BJ (cell line): ENCODE measurements at regions of chr3 and their contacts with region 1.

Region 1: GRCh38 chr3:11335056-11335608 is 62.9 kb downstream of the ATG7 start:
- DNase-seq: no peak
- H3K4me3 ChIP-seq: no peak overlapping the region
- H3K27me3 ChIP-seq: no peaks in the 10 kb centered on the region
- CTCF ChIP-seq: peak; percentile 66

Region 2: DNA sequence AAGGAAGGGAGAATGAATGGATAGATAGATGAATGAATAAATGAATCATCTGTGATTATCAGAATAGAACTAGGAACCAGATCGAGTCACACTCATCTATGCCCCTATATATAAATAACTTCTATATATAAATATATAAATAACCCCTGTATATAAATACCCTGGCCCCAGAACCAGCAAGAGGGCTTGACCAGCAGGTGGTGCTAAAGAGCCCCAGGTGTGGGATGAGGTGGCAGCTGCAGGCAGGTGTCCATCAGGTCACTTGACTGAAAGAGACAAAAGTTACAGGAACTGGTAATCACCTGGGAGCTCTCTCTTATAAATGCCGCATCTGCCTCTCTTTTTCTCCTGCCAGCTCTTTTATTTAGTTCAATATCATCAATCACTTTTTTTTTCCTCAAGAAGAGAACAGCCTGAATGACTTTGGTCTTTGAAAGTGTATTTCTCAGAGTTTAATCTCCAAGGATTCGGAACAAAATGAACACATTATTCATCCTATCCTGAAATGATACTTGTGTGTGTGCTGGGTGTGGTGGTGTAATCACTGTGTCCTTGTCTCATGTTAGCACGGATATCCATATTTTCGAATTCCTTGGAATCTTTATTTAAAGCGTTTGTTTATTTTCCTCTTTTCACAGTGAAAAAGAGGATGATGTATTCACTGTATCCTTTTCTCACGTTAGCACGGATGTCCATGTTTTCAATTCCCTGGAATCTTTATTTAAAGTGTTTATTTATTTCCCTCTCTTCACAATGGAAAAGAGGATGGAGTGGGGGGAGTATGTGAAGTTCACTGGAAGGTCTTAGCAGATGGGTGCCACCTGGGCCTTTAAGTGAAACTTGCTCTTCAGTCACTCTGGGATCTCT is 98.3 kb before region 1 on chr3:
- CTCF ChIA-PET with region 1: interaction called, 24 read pairs
- POLR2A ChIA-PET with region 1: no interaction called
- DNase-seq: peak; percentile 71
- H3K4me3 ChIP-seq: no peak overlapping the region
- H3K27me3 ChIP-seq: no peaks in the 10 kb centered on the region
- CTCF ChIP-seq: peak; percentile 71

Region 3: GRCh38 chr3:11322931-11323330 is 12.2 kb before region 1 on chr3:
- CTCF ChIA-PET with region 1: interaction called, 12 read pairs
- POLR2A ChIA-PET with region 1: interaction called, 4 read pairs
- DNase-seq: no peak
- H3K4me3 ChIP-seq: no peak overlapping the region
- H3K27me3 ChIP-seq: no peaks in the 10 kb centered on the region
- CTCF ChIP-seq: no peak

Region 4: DNA sequence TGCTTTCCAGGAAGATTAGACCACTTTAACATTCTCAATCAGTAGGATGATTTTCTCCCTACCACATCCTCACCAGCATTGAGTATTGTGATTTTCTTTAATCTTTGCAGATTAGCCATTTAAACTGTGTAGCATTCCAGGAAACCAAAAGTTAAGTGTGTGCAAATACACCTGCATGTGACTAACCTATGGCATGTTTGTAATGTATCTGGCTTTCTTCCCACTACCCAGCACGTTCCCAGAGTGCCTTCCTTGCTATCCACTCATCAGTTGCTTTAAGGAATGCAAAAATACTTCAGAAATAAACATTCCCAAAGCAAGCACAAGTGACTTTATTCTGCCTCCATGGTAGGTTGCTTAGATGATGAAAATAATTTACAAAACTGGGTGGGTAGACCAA is 11.3 kb after region 1 on chr3:
- CTCF ChIA-PET with region 1: interaction called, 10 read pairs
- POLR2A ChIA-PET with region 1: no interaction called
- DNase-seq: no peak
- H3K4me3 ChIP-seq: no peak overlapping the region
- H3K27me3 ChIP-seq: no peaks in the 10 kb centered on the region
- CTCF ChIP-seq: no peak